Head of caudate nucleus (tissue), 42 donors: ENCODE measurements at regions of chr1 and their contacts with region 1.

Region 1: GRCh38 chr1:109426278-109427170 is at the start of gene PSMA5:
- DNase-seq: peak; percentile 93 to 99 (median 97)

Region 2: DNA sequence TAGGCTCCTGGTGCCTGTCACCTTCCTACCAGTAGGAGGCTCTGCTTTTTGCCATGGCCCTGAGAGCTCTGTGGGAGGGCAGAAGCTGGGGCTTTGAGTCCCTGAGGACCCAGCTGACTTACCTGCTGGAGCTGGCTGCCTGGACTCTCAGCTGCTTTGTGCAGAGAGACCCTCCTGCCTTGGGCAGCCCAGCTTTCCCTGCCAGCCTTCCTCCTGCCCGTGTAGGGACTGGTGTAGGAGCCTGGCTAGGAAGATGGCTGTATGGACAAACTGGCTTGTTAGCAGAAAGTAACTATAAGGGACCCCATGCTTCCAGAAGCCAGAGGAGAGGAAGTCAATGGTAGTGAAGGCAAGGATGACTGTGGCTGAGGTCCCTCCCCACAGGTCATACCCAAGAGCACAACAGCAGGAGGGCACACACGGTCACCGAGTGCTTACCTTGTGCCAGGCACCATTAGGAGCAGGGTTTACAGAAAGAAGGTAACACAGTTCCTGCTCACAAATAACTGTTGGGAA is 186.9 kb before region 1 on chr1:
- intact Hi-C with region 1: no loop called
- DNase-seq: peak in 10 of 42 donors; percentile 21 to 72 (median 54)

Region 3: GRCh38 chr1:109483672-109484518 is 57.4 kb after region 1 on chr1 and contains the start of gene ATXN7L2:
- intact Hi-C with region 1: loop called (anchors 5 kb)
- DNase-seq: peak; percentile 75 to 96 (median 94)